Left ventricle myocardium superior (tissue), 1 donor: ENCODE measurements at regions of chr12 and their contacts with region 1.

Region 1: DNA sequence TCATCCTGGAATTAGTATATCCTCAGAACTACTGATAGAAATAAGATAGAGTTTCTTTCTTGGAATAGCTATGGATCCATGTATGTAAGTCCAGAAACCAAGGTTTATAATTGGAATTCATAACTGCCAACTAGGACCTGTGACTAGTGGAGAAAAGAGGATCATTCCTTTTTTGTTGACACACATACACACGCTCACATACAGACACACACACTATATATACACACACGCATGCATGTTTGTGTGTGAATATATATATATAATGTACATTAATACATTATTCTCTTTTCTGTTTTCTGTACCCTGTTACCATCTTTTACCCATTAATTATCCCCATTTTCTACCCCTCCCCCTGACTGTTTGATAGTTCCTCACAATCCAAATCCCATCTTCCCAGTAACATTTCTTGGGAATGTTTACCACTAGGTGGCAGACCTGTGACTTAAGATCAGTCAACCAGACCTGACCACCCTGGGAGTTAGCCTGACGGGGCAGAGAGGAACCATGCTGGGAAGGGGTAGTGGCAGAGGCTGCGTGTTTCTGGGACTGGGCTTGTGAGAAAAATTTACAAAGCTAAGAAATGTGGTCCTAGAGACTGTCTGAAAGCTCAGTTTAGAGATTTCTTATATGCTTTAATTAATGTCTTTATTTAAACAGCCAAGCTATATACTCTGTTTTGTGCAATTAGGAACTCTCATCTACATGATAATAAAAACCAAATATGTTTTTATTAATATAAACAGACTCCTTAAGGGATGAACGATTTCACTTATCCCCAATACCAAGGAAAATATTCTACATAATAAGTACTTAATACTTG is 308.0 kb downstream of the PPFIA2 start:
- DNase-seq: no peak
- ATAC-seq: peak; percentile 72

Region 2: GRCh38 chr12:81360916-81361315 is 90.2 kb before region 1 on chr12:
- intact Hi-C with region 1: no loop called
- DNase-seq: no peak
- ATAC-seq: no peak

Region 3: GRCh38 chr12:81530352-81530751 is 79.2 kb after region 1 on chr12:
- intact Hi-C with region 1: no loop called
- DNase-seq: no peak
- ATAC-seq: no peak

Region 4: DNA sequence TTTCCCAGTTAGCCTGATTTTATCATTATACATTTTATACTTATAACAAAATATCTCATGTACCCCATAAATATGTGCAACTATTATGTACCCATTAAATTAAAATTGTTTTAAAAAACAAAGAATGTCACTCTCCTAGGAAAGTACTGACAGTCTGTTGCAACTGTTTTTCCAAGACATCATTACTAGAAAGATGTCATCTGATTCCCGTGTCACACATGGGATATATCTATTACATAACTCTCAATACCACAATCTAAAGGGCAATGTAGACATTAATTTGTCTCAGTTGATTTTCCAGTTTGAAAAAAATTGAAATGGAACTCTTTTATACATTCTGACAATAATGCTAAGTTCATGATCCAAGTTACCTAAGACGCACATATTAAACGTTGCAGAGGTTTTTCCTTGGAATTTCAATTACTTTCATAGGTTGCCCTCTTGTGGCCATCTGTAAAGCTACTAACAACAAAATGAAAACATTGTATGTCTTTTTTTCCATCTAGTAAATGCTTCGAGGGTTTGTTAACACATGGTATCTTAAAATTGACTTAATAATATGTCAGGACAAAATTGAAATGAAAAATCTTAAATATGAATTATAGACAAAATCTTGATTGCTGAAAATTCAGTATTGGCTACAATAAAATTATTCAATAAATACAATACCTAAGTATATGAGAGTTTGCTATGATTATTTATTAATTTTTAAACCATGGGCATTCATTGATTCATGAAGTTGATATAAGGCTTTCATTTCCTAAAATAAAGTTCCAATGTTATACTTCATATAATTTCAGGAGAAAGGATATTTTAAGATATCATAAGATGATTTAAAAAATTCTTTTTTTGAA is 176.4 kb after region 1 on chr12:
- intact Hi-C with region 1: loop called (anchors 2 kb)
- DNase-seq: no peak
- ATAC-seq: no peak